H1 (cell line): ENCODE measurements at regions of chr5 and their contacts with region 1.

Region 1: GRCh38 chr5:145887976-145888574 is 15.3 kb upstream of the GRXCR2 start:
- DNase-seq: peak; percentile 21 to 61
- H3K4me3 ChIP-seq: no peak overlapping the region
- H3K27ac ChIP-seq: no peak overlapping the region
- H3K4me1 ChIP-seq: peaks cover 0 to 2% (median 0%) of the 10 kb centered on the region in 4 experiments; a peak in 1 of 7 replicates
- H3K27me3 ChIP-seq: no peaks in the 10 kb centered on the region
- CTCF ChIP-seq: peak; percentile 58 to 93 (median 73)
- EP300 ChIP-seq: no peak
- POLR2A ChIP-seq: no peak
- RAD21 ChIP-seq: peak; percentile 64 to 68

Region 2: GRCh38 chr5:145739840-145740239 is 148.2 kb before region 1 on chr5:
- CTCF ChIA-PET with region 1: no interaction called
- POLR2A ChIA-PET with region 1: no interaction called
- DNase-seq: no peak
- H3K4me3 ChIP-seq: no peak overlapping the region
- H3K27ac ChIP-seq: no peak overlapping the region
- H3K4me1 ChIP-seq: no peaks in the 10 kb centered on the region
- H3K27me3 ChIP-seq: no peaks in the 10 kb centered on the region
- CTCF ChIP-seq: no peak
- EP300 ChIP-seq: no peak
- POLR2A ChIP-seq: no peak
- RAD21 ChIP-seq: no peak

Region 3: GRCh38 chr5:145840458-145841132 is 47.5 kb before region 1 on chr5:
- CTCF ChIA-PET with region 1: interaction called, 14 read pairs
- POLR2A ChIA-PET with region 1: no interaction called
- DNase-seq: no peak
- H3K4me3 ChIP-seq: no peak overlapping the region
- H3K27ac ChIP-seq: no peak overlapping the region
- H3K4me1 ChIP-seq: peaks cover 1 to 5% (median 3%) of the 10 kb centered on the region in 4 experiments; a peak in 4 of 7 replicates
- H3K27me3 ChIP-seq: peaks cover 0 to 7% (median 6%) of the 10 kb centered on the region in 4 experiments; a peak in 4 of 7 replicates
- CTCF ChIP-seq: no peak
- EP300 ChIP-seq: no peak
- POLR2A ChIP-seq: no peak
- RAD21 ChIP-seq: no peak

Region 4: GRCh38 chr5:145856285-145856818 is 31.7 kb before region 1 on chr5:
- CTCF ChIA-PET with region 1: interaction called, 15 read pairs
- POLR2A ChIA-PET with region 1: interaction called, 3 read pairs
- DNase-seq: peak; percentile 36 to 81
- H3K4me3 ChIP-seq: peak overlapping the region; percentile 48 to 59 (median 56)
- H3K27ac ChIP-seq: peak overlapping the region; percentile 45; the same call in 1 of the 2 replicates
- H3K4me1 ChIP-seq: peaks cover 3 to 5% (median 3%) of the 10 kb centered on the region in 4 experiments; a peak in 5 of 7 replicates
- H3K27me3 ChIP-seq: no peaks in the 10 kb centered on the region
- CTCF ChIP-seq: no peak
- EP300 ChIP-seq: no peak
- POLR2A ChIP-seq: peak in 1 of 2 experiments; percentile 36; a peak in 1 of 3 replicates
- RAD21 ChIP-seq: peak in 1 of 2 experiments; percentile 8; a peak in 1 of 4 replicates

Region 5: DNA sequence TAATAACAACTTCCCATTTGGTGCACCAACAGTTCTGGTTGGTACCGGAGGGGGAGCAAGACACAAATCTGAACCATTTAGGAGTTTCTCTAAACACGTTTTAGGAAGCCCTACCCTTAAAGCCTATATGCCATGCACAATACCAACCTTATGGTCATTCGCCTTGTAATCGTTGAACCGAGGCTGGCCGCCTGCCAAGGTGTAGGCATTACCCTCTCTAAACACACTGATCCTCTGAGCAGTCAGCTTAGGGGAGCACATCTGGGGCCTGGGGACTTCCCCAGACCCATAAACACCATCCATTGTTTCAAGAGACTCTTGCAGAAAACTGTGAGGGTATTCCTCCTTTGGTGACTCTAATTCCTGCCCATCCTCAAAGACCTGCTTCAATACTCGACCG is 15.6 kb before region 1 on chr5:
- CTCF ChIA-PET with region 1: interaction called, 39 read pairs
- POLR2A ChIA-PET with region 1: no interaction called
- DNase-seq: no peak
- H3K4me3 ChIP-seq: no peak overlapping the region
- H3K27ac ChIP-seq: no peak overlapping the region
- H3K4me1 ChIP-seq: no peaks in the 10 kb centered on the region
- H3K27me3 ChIP-seq: no peaks in the 10 kb centered on the region
- CTCF ChIP-seq: no peak
- EP300 ChIP-seq: no peak
- POLR2A ChIP-seq: no peak
- RAD21 ChIP-seq: no peak

Region 6: DNA sequence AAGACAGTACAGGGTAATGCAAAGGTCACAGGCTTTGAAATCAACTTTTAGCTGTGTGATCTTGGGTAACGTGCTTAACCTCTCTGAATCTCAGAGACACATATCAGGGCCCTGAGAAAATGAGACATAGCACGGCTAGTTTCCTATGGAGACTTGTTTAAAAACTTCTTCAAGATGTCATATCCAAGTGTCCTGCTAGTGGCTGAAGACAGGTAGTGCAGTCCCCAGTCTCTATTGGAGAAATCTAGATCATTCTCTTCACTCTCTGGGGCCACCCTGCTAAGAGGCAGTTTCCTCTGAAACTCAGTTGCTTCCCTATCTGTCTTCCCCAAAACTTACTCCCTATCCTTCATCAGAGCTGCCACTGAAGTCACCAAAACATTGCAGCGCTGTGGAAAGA is 15.0 kb after region 1 on chr5:
- CTCF ChIA-PET with region 1: interaction called, 49 read pairs
- POLR2A ChIA-PET with region 1: no interaction called
- DNase-seq: no peak
- H3K4me3 ChIP-seq: no peak overlapping the region
- H3K27ac ChIP-seq: no peak overlapping the region
- H3K4me1 ChIP-seq: no peaks in the 10 kb centered on the region
- H3K27me3 ChIP-seq: no peaks in the 10 kb centered on the region
- CTCF ChIP-seq: peak in 2 of 3 experiments; percentile 7 to 39; a peak in 2 of 4 replicates
- EP300 ChIP-seq: no peak
- POLR2A ChIP-seq: no peak
- RAD21 ChIP-seq: 0 out of 4 replicates have a peak, but pooled peaks have one; percentile 13 to 15

Region 7: GRCh38 chr5:145908205-145908945 is 20.3 kb after region 1 on chr5:
- CTCF ChIA-PET with region 1: interaction called, 49 read pairs
- POLR2A ChIA-PET with region 1: no interaction called
- DNase-seq: no peak
- H3K4me3 ChIP-seq: no peak overlapping the region
- H3K27ac ChIP-seq: no peak overlapping the region
- H3K4me1 ChIP-seq: no peaks in the 10 kb centered on the region
- H3K27me3 ChIP-seq: no peaks in the 10 kb centered on the region
- CTCF ChIP-seq: peak in 2 of 3 experiments; percentile 38 to 51; a peak in 3 of 4 replicates
- EP300 ChIP-seq: no peak
- POLR2A ChIP-seq: no peak
- RAD21 ChIP-seq: peak; percentile 51 to 66

Region 8: DNA sequence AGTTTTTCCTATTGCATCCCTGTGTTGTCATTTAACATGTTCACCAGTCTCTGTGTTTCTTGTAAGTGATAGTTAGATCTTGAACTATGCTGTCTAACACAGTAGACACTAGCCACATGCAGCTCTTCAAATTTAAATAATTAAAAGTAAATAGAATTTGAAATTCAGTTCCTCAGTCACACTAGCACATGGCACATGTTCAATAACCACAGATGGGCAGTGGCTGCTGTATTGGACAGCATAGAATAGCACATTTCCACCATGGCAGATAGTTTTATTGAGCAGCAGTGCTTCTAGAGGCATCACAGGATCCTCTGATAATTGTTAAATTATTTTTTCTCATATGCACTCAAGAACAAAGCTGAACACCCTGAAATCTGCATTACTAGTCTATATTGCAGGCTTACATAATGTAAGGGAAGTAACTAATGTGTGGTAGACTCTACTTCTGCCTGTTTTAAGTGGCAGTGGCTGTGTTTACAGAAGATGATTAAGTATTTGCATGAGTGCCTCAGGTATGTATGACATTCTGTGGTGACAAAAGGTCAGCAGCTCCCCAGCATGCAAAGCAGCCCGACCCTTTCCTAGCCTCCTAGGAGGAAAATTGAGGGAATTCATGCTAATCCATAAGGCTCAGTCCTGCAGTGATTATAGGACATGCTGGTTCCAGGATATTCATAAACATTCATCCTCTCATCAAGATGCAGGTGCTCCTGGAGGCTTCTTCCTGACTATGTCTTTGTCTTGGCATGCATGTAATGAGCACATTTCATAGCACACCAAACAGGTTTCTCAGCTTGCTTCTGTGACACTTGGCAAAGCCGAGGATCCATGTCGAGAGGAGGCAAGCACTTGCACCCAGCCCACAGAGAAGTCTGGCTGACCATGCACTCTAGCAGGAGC is 93.8 kb after region 1 on chr5:
- CTCF ChIA-PET with region 1: interaction called, 10 read pairs
- POLR2A ChIA-PET with region 1: no interaction called
- DNase-seq: no peak
- H3K4me3 ChIP-seq: no peak overlapping the region
- H3K27ac ChIP-seq: no peak overlapping the region
- H3K4me1 ChIP-seq: peaks cover 0 to 7% (median 3%) of the 10 kb centered on the region in 4 experiments; a peak in 2 of 7 replicates
- H3K27me3 ChIP-seq: no peaks in the 10 kb centered on the region
- CTCF ChIP-seq: no peak
- EP300 ChIP-seq: no peak
- POLR2A ChIP-seq: no peak
- RAD21 ChIP-seq: no peak

Region 9: GRCh38 chr5:146446853-146447733 is 559.0 kb after region 1 on chr5 and contains the start of gene TCERG1:
- CTCF ChIA-PET with region 1: no interaction called
- POLR2A ChIA-PET with region 1: no interaction called
- DNase-seq: peak; percentile 94 to 99
- H3K4me3 ChIP-seq: peak within 1 kb of the TSS; percentile 74 to 95 (median 93)
- H3K27ac ChIP-seq: peak within 1 kb of the TSS; percentile 97
- H3K4me1 ChIP-seq: peaks cover 3 to 9% (median 4%) of the 10 kb centered on the region in 4 experiments; a peak in 4 of 7 replicates
- H3K27me3 ChIP-seq: 0 out of 7 replicates have a peak, but pooled peaks cover 0 to 2% (median 0%) of the 10 kb centered on the region in 4 experiments
- CTCF ChIP-seq: peak in 2 of 3 experiments; percentile 58 to 63; a peak in 3 of 4 replicates
- EP300 ChIP-seq: no peak
- POLR2A ChIP-seq: peak; percentile 94
- RAD21 ChIP-seq: no peak
- total RNA-seq, gene TCERG1: 105 TPM in 2 replicates